ENCODE measurements at regions of chr5 and their contacts with region 1.

Region 1: GRCh38 chr5:172137041-172137440 is 51.0 kb downstream of the STK10 start:
- DNase-seq: no peak
- H3K4me3 ChIP-seq: no peak overlapping the region
- H3K27ac ChIP-seq: no peak overlapping the region
- H3K4me1 ChIP-seq: no peaks in the 10 kb centered on the region
- H3K27me3 ChIP-seq: no peaks in the 10 kb centered on the region
- CTCF ChIP-seq: no peak

Region 2: GRCh38 chr5:172223901-172224873 is 87.1 kb after region 1 on chr5:
- CTCF ChIA-PET with region 1: no interaction called
- POLR2A ChIA-PET with region 1: interaction called, 13 read pairs
- intact Hi-C with region 1: no loop called
- DNase-seq: no peak
- H3K4me3 ChIP-seq: no peak overlapping the region
- H3K27ac ChIP-seq: no peak overlapping the region
- H3K4me1 ChIP-seq: no peaks in the 10 kb centered on the region
- H3K27me3 ChIP-seq: no peaks in the 10 kb centered on the region
- CTCF ChIP-seq: no peak

Measured in A673 (cell line).